Testis (tissue), 5 donors: ENCODE measurements at regions of chr7 and their contacts with region 1.

Region 1: DNA sequence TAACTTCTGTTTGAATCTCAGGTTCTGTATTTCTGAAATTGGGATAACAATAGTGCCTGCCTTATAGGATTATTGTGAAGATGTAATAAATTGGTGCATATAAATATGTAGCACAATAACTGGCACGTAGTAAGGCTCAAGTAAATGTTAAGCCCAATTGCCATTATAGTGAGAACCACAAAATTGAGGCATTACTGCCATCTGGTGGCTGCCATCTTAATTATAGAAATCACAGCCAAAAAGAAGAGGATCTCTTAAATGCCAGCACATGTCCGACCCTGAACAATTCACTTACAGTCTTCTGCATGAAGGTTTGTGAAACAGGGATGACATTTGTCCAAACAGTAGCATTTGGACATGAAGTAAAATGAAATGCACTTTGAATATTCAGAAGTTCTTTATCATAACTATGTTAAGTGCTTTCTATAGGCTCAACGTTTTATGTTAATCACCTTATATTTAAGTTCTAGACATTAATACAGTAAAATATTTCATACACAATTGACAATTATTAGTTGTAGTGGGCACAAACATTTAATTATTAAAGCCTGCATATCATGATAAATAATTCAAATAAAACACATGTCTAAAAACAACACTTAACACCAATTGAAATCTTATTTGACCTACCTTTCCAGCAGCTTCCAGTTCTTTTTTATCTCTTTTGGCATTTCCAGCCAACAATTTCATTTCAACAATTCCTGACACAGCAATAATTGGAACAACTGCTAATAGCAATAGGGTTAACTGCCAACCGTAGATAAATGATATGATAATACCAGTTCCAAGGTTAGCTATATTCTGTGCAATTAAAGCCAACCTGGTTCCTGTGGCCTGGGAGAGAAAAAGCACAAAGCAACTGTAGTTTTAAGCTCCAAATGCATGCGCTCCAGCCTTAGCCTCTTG is 58.5 kb downstream of the ABCB4 start:
- DNase-seq: peak; percentile 84
- H3K4me3 ChIP-seq: no peak overlapping the region
- H3K27ac ChIP-seq: no peak overlapping the region
- H3K4me1 ChIP-seq: no peaks in the 10 kb centered on the region
- H3K27me3 ChIP-seq: no peaks in the 10 kb centered on the region
- CTCF ChIP-seq: peak; percentile 52 to 75 (median 63)
- POLR2A ChIP-seq: no peak

Region 2: GRCh38 chr7:87312215-87312865 is 104.6 kb before region 1 on chr7:
- intact Hi-C with region 1: loop called (anchors 5 kb)
- DNase-seq: peak; percentile 62
- H3K4me3 ChIP-seq: no peak overlapping the region
- H3K27ac ChIP-seq: no peak overlapping the region
- H3K4me1 ChIP-seq: no peaks in the 10 kb centered on the region
- H3K27me3 ChIP-seq: no peaks in the 10 kb centered on the region
- CTCF ChIP-seq: peak; percentile 86 to 99 (median 93)
- POLR2A ChIP-seq: no peak